Activated T-helper 1 cell treated with anti-CD3 and anti-CD28 coated beads, Interleukin-12 subunit alpha, Interleukin-12 subunit beta, Interleukin-2, Interleukin-4 antibody, amounts not matched to agents 30 ng/mL and 10 ng/mL and 1 ng/mL, durations not matched to agents 14 hours and 24 hours and 36 hours (primary cell): ENCODE measurements at regions of chrX and their contacts with region 1.

Region 1: GRCh38 chrX:19887911-19888879 is 795 bp upstream of the SH3KBP1 start:
- DNase-seq: peak; percentile 11
- H3K4me3 Mint-ChIP-seq: peak overlapping the region; percentile 78
- H3K27ac Mint-ChIP-seq: peak overlapping the region; percentile 70
- H3K4me1 Mint-ChIP-seq: peaks cover 25% of the 10 kb centered on the region
- H3K27me3 Mint-ChIP-seq: no peaks in the 10 kb centered on the region

Region 2: GRCh38 chrX:19544693-19545305 is 343.4 kb before region 1 on chrX:
- intact Hi-C with region 1: loop called (anchors 1 kb)
- DNase-seq: no peak
- H3K4me3 Mint-ChIP-seq: no peak overlapping the region
- H3K27ac Mint-ChIP-seq: peak overlapping the region; percentile 61
- H3K4me1 Mint-ChIP-seq: peaks cover 35% of the 10 kb centered on the region
- H3K27me3 Mint-ChIP-seq: no peaks in the 10 kb centered on the region

Region 3: GRCh38 chrX:19682712-19683331 is 205.4 kb before region 1 on chrX:
- intact Hi-C with region 1: loop called (anchors 2 kb)
- DNase-seq: peak; percentile 76
- H3K4me3 Mint-ChIP-seq: peak overlapping the region; percentile 59
- H3K27ac Mint-ChIP-seq: peak overlapping the region; percentile 98
- H3K4me1 Mint-ChIP-seq: peaks cover 88% of the 10 kb centered on the region
- H3K27me3 Mint-ChIP-seq: no peaks in the 10 kb centered on the region

Region 4: GRCh38 chrX:19747652-19748610 is 140.3 kb before region 1 on chrX:
- intact Hi-C with region 1: loop called (anchors 2 kb)
- DNase-seq: peak; percentile 72
- H3K4me3 Mint-ChIP-seq: peak overlapping the region; percentile 67
- H3K27ac Mint-ChIP-seq: peak overlapping the region; percentile 93
- H3K4me1 Mint-ChIP-seq: peaks cover 91% of the 10 kb centered on the region
- H3K27me3 Mint-ChIP-seq: no peaks in the 10 kb centered on the region

Region 5: GRCh38 chrX:19799319-19800182 is 88.6 kb before region 1 on chrX:
- intact Hi-C with region 1: loop called (anchors 2 kb)
- DNase-seq: peak; percentile 27
- H3K4me3 Mint-ChIP-seq: peak overlapping the region; percentile 88
- H3K27ac Mint-ChIP-seq: peak overlapping the region; percentile 95
- H3K4me1 Mint-ChIP-seq: peaks cover 77% of the 10 kb centered on the region
- H3K27me3 Mint-ChIP-seq: no peaks in the 10 kb centered on the region

Region 6: DNA sequence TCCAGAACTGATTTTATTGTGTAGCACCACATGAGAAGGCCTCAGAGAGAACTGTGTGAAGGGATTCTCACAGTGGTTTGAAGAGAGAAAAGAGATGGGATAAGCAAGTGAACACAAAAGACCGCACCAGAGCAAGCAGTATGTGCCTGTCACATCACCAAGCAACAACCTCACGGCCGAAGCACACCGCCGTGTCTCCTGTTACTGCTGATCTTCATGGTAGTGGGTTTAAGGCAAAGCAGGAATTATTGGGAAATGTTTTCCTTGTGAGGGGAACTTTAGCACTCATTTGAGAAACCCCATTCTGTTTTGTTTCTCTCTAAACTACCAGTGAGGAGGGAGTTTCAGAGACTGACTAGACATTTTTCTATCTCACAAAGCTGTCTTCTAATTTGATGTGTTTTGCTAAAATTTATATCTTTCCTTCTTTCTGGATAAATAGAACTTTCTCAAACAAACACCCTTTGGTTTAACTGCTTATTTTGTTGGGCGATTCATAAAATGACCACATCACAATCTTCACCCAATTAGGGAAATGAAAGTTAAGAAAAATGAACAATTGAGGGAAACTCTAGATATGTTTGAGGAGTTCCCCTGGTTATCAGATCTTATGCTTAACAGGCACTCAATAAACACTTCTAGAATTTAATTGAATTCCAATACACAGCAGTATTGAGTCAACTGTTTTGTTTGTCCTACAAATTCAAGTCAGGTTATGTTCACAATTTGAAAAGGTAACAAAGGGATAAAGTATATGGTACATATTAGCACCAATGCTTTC is 17.3 kb before region 1 on chrX:
- intact Hi-C with region 1: loop called (anchors 2 kb)
- DNase-seq: no peak
- H3K4me3 Mint-ChIP-seq: no peak overlapping the region
- H3K27ac Mint-ChIP-seq: peak overlapping the region; percentile 34
- H3K4me1 Mint-ChIP-seq: peaks cover 66% of the 10 kb centered on the region
- H3K27me3 Mint-ChIP-seq: no peaks in the 10 kb centered on the region

Region 7: GRCh38 chrX:19931146-19931545 is 43.0 kb after region 1 on chrX:
- intact Hi-C with region 1: no loop called
- DNase-seq: no peak
- H3K4me3 Mint-ChIP-seq: no peak overlapping the region
- H3K27ac Mint-ChIP-seq: no peak overlapping the region
- H3K4me1 Mint-ChIP-seq: no peaks in the 10 kb centered on the region
- H3K27me3 Mint-ChIP-seq: no peaks in the 10 kb centered on the region